ENCODE measurements at regions of chr19 and their contacts with region 1.

Region 1: DNA sequence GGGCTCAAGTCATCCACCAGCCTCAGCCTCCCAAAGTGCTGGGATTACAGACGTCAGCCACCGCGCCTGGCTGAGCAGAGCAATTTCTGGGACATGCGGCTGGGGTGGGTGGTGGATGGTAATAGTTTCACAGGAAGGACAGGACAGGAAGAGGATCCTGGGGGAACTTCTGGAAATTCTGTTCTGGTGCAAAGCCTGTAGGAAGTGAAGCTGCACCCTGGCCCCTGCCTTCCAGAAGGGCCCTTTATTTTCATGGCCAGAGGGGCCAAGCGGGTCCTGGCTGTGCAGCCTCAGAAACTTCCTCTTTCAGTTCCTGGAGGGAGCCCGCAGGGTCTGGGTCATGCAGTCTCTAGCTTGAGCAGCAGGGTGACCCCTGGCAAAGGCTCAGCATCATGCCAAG is 15.7 kb downstream of the FEM1A start:
- DNase-seq: peak in 1 of 4 donors; percentile 65
- ATAC-seq: no peak
- H3K4me3 ChIP-seq: no peak overlapping the region
- H3K27ac ChIP-seq: peak overlapping the region in 1 of 4 donors; percentile 60
- H3K4me1 ChIP-seq: no peaks in the 10 kb centered on the region
- H3K27me3 ChIP-seq: no peaks in the 10 kb centered on the region
- CTCF ChIP-seq: no peak
- POLR2A ChIP-seq: no peak

Region 2: GRCh38 chr19:5031231-5032100 is 224.3 kb after region 1 on chr19:
- intact Hi-C with region 1: loop called (anchors 5 kb)
- DNase-seq: peak; percentile 82 to 87 (median 85)
- ATAC-seq: peak; percentile 87
- H3K4me3 ChIP-seq: no peak overlapping the region
- H3K27ac ChIP-seq: no peak overlapping the region
- H3K4me1 ChIP-seq: peaks cover 16% of the 10 kb centered on the region
- H3K27me3 ChIP-seq: no peaks in the 10 kb centered on the region
- CTCF ChIP-seq: peak; percentile 85 to 93 (median 90)
- POLR2A ChIP-seq: no peak